ENCODE measurements at regions of chr5 and their contacts with region 1.

Region 1: GRCh38 chr5:164204338-164204946 is 699.0 kb downstream of the MAT2B start:
- DNase-seq: no peak
- H3K4me3 ChIP-seq: no peak overlapping the region
- H3K27ac ChIP-seq: no peak overlapping the region
- H3K4me1 ChIP-seq: no peaks in the 10 kb centered on the region
- H3K27me3 ChIP-seq: no peaks in the 10 kb centered on the region
- CTCF ChIP-seq: no peak
- EP300 ChIP-seq: no peak
- POLR2A ChIP-seq: no peak

Region 2: GRCh38 chr5:163821142-163821541 is 383.3 kb before region 1 on chr5:
- in situ Hi-C with region 1: no loop called
- intact Hi-C with region 1: no loop called
- DNase-seq: no peak
- H3K4me3 ChIP-seq: no peak overlapping the region
- H3K27ac ChIP-seq: no peak overlapping the region
- H3K4me1 ChIP-seq: no peaks in the 10 kb centered on the region
- H3K27me3 ChIP-seq: no peaks in the 10 kb centered on the region
- CTCF ChIP-seq: no peak
- EP300 ChIP-seq: no peak
- POLR2A ChIP-seq: no peak

Region 3: DNA sequence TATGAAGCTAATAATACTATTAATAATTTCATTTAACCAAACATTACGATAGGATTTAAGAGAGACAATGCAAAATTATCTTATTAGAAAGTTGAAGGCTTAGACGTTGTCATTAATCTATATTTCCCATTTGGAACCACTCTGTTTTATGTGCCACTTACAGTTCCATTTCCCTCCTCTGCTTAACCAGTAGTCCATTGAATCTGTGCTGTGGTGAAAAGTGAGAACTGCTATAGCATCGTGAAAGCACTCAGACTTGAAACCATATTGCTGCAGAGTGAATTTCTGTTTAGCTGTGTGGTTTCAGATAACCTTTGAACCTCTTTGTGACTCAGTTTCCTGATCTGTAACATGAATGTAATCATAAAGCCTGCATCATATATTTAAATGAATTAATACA is 1605.5 kb after region 1 on chr5:
- in situ Hi-C with region 1: no loop called
- intact Hi-C with region 1: loop called (anchors 5 kb)
- DNase-seq: no peak
- H3K4me3 ChIP-seq: no peak overlapping the region
- H3K27ac ChIP-seq: no peak overlapping the region
- H3K4me1 ChIP-seq: no peaks in the 10 kb centered on the region
- H3K27me3 ChIP-seq: no peaks in the 10 kb centered on the region
- CTCF ChIP-seq: no peak
- EP300 ChIP-seq: no peak
- POLR2A ChIP-seq: no peak